ENCODE measurements at regions of chr1 and their contacts with region 1.

Region 1: DNA sequence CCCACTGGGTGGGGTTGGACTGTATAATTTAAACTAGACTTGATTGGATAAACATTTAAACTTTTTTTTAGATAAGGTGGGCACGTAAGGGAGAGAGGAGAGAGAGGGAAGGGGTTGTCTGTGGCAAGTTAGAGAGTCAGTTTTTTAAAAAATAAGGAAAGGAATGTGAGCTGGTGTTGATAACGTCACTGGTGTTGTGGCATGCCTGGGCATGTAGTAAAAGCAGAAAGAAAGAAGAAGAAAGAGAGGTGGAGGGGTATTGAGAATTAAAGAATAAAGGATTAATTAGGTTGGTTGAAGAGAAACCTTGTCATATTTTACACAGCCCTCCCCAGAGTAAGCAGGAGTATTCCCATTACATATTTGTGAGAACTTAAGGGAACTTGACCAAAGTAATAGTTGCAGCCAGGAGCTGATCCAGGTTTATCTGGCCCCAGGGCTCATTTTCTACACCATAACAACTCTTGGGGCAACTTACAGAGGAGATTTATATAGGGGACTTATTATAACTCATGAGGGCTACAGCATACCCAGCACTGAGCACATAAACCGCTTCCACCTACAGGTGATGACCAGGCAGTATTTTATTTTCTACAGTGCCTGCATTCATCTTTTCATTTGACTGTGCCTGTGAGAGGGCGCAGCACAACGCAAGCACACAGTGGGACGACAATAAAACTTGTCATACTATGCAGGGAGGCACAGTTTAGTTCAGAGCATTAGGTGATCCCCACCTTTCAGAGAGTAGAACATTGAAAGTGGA is 70.2 kb downstream of the CCDC30 start:
- DNase-seq: no peak
- ATAC-seq: no peak
- H3K4me3 ChIP-seq: no peak overlapping the region
- H3K4me3 Mint-ChIP-seq: no peak overlapping the region
- H3K27ac ChIP-seq: no peak overlapping the region
- H3K27ac Mint-ChIP-seq: no peak overlapping the region
- H3K4me1 ChIP-seq: peaks cover 0 to 6% of the 10 kb centered on the region in 2 experiments
- H3K4me1 Mint-ChIP-seq: peaks cover 7 to 14% (median 10%) of the 10 kb centered on the region in 3 donors
- H3K27me3 ChIP-seq: no peaks in the 10 kb centered on the region
- H3K27me3 Mint-ChIP-seq: no peaks in the 10 kb centered on the region

Region 2: DNA sequence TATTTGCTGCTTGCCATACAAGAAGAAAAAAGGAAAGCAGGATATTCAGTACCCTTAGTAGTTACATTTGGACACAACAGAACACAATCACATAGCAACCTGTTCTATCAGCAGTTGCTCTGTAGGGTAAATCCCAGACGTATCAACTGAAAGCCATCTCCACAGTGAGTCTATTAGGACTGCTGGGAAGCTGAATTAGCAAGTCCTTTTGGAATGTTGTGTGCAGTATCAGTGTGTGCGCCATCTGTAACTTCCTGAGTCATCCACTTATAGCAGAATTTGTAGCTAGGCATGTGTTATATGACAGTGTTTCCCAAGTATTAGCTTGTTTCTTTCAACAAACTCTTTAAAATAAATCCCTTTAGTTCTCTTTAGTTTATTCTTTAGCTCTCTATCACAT is 48.9 kb before region 1 on chr1:
- CTCF ChIA-PET with region 1: no interaction called
- POLR2A ChIA-PET with region 1: interaction called in 1 of 2 experiments, 12 read pairs
- DNase-seq: no peak
- ATAC-seq: no peak
- H3K4me3 ChIP-seq: no peak overlapping the region
- H3K4me3 Mint-ChIP-seq: no peak overlapping the region
- H3K27ac ChIP-seq: no peak overlapping the region
- H3K27ac Mint-ChIP-seq: no peak overlapping the region
- H3K4me1 ChIP-seq: no peaks in the 10 kb centered on the region
- H3K4me1 Mint-ChIP-seq: no peaks in the 10 kb centered on the region
- H3K27me3 ChIP-seq: no peaks in the 10 kb centered on the region
- H3K27me3 Mint-ChIP-seq: no peaks in the 10 kb centered on the region

Measured in T-cell (primary cell).